Activated naive CD8-positive, alpha-beta T cell treated with anti-CD3 and anti-CD28 coated beads, Interleukin-2, amount 10 ng/mL, durations not matched to agents 7 days and 5 days (primary cell): ENCODE measurements at regions of chr12 and their contacts with region 1.

Region 1: GRCh38 chr12:47079468-47079980 is at the starts of genes AMIGO2 and PCED1B:
- DNase-seq: peak; percentile 78
- ATAC-seq: peak; percentile 65
- H3K4me3 Mint-ChIP-seq: peak within 1 kb of the TSS; percentile 96
- H3K27ac Mint-ChIP-seq: peak within 1 kb of the TSS; percentile 93
- H3K4me1 Mint-ChIP-seq: peaks cover 51% of the 10 kb centered on the region
- H3K27me3 Mint-ChIP-seq: no peaks in the 10 kb centered on the region
- total RNA-seq, gene AMIGO2: 20.2 to 20.5 TPM
- total RNA-seq, gene PCED1B: 102 to 104 TPM

Region 2: GRCh38 chr12:47052274-47052673 is 27.2 kb before region 1 on chr12:
- POLR2A ChIA-PET with region 1: no interaction called
- DNase-seq: no peak
- ATAC-seq: no peak
- H3K4me3 Mint-ChIP-seq: no peak overlapping the region
- H3K27ac Mint-ChIP-seq: no peak overlapping the region
- H3K4me1 Mint-ChIP-seq: no peaks in the 10 kb centered on the region
- H3K27me3 Mint-ChIP-seq: no peaks in the 10 kb centered on the region

Region 3: DNA sequence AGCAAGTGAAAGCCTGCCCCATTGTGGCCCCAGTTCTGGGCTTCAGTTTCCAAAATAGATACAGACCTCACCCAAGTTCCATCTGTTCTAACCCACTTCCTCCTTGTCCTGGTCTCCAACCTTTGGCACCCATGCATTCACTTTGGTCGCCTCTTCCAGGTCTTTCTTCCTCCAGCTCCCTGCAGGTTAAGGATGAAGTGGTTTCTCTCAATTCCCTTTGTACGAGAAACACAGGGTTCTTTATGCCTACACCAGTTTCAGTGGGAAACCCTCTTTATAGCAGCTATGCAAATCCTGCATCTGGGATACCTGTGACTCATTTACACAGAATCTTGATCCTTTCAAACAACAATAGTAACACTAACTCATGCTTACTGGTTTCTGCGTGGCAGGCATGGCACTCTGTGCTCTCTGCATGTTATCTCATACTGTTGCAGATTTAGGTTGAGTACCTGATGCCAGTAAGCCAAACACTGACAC is 110.8 kb after region 1 on chr12:
- POLR2A ChIA-PET with region 1: interaction called, 57 read pairs
- DNase-seq: no peak
- ATAC-seq: no peak
- H3K4me3 Mint-ChIP-seq: no peak overlapping the region
- H3K27ac Mint-ChIP-seq: peak overlapping the region; percentile 56
- H3K4me1 Mint-ChIP-seq: peaks cover 63% of the 10 kb centered on the region
- H3K27me3 Mint-ChIP-seq: no peaks in the 10 kb centered on the region

Region 4: GRCh38 chr12:47207340-47207717 is 127.8 kb after region 1 on chr12:
- POLR2A ChIA-PET with region 1: interaction called, 258 read pairs
- DNase-seq: peak; percentile 62
- ATAC-seq: peak; percentile 67
- H3K4me3 Mint-ChIP-seq: peak overlapping the region; percentile 87
- H3K27ac Mint-ChIP-seq: peak overlapping the region; percentile 88
- H3K4me1 Mint-ChIP-seq: peaks cover 62% of the 10 kb centered on the region
- H3K27me3 Mint-ChIP-seq: no peaks in the 10 kb centered on the region

Region 5: DNA sequence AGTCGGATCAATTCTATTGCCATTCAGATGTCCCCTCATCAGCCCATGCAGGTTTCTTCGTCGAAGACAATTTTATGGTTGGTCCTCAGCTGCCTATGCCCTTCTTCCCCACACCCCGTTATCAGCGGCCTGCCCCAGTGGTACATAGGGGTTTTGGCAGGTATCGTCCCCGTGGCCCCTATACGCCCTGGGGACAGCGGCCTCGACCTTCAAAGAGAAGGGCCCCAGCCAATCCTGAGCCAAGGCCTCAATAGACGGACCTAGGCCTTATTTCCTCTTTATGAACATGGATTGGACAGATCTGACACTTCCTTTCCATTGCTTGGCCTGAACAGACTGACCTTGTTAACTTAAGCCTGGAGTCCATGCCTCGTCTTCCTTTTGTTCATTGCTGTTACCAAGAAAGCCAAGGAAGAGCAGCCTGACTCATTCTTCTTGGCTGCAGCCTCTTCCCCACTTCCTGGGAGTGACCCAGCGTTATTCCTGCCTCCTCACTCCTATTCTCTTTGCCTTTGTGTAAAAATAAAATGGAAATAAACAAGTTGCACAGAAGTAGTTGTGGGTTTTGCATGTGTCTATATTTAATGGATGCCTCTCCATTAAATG is 156.7 kb after region 1 on chr12:
- POLR2A ChIA-PET with region 1: interaction called, 10 read pairs
- DNase-seq: no peak
- ATAC-seq: no peak
- H3K4me3 Mint-ChIP-seq: peak overlapping the region; percentile 37
- H3K27ac Mint-ChIP-seq: peak overlapping the region; percentile 13
- H3K4me1 Mint-ChIP-seq: peaks cover 42% of the 10 kb centered on the region
- H3K27me3 Mint-ChIP-seq: no peaks in the 10 kb centered on the region